ENCODE measurements at regions of chr7 and their contacts with region 1.

Region 1: DNA sequence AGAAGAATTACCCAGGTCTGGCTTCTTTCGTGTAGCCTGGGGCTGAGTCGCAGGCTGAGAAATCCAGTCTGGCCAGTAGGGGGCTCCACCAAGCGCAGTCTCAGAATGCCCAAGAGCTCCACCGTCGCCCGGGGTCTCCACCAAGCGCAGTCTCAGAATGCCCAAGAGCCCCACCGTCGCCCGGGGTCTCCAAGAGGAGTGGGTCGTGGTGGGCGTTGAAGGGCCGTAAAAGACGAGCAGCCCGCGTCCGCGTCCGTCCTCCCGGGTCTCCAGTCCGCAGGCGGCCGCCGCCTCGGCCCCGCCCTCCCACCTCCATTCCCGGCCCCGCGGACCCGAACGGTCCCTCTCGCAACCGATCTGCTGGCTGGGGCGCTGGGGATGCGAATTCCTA is 895 bp upstream of the ZYX start:
- DNase-seq: peak; percentile 92
- ATAC-seq: peak; percentile 55
- H3K4me3 ChIP-seq: peak overlapping the region; percentile 1 to 99 (median 90)
- H3K4me3 Mint-ChIP-seq: peak overlapping the region; percentile 92
- H3K27ac ChIP-seq: peak overlapping the region; percentile 87 to 89
- H3K27ac Mint-ChIP-seq: peak overlapping the region; percentile 93
- H3K4me1 ChIP-seq: peaks cover 43 to 53% of the 10 kb centered on the region in 2 donors
- H3K4me1 Mint-ChIP-seq: peaks cover 28% of the 10 kb centered on the region
- H3K27me3 ChIP-seq: no peaks in the 10 kb centered on the region
- H3K27me3 Mint-ChIP-seq: no peaks in the 10 kb centered on the region
- CTCF ChIP-seq: peak; percentile 85

Region 2: DNA sequence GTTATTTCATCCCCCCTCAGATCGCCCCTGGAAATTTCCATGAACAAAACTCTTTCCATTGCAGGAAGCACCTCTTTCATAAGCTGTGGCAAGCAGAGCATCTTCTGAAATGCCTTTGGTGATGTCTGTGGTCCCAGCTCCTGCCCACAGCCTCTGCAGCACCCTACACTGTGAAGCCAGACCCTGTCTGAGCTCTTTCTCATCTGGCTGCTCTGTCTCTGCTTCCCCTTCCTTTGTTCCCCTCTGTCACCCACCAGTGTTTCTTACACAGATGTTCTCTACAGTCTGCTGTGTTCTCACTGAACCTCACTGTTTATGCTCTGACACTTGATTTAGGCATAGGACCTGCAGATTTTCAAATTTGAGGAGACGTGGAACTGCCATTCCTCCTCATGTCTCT is 198.9 kb before region 1 on chr7:
- CTCF ChIA-PET with region 1: no interaction called
- POLR2A ChIA-PET with region 1: interaction called, 10 read pairs
- intact Hi-C with region 1: no loop called
- DNase-seq: peak; percentile 67
- ATAC-seq: peak; percentile 69
- H3K4me3 ChIP-seq: no peak overlapping the region
- H3K4me3 Mint-ChIP-seq: peak overlapping the region; percentile 5
- H3K27ac ChIP-seq: peak overlapping the region; percentile 51 to 79
- H3K27ac Mint-ChIP-seq: peak overlapping the region; percentile 71
- H3K4me1 ChIP-seq: peaks cover 26 to 29% of the 10 kb centered on the region in 2 donors
- H3K4me1 Mint-ChIP-seq: peaks cover 34% of the 10 kb centered on the region
- H3K27me3 ChIP-seq: no peaks in the 10 kb centered on the region
- H3K27me3 Mint-ChIP-seq: no peaks in the 10 kb centered on the region
- CTCF ChIP-seq: no peak

Region 3: DNA sequence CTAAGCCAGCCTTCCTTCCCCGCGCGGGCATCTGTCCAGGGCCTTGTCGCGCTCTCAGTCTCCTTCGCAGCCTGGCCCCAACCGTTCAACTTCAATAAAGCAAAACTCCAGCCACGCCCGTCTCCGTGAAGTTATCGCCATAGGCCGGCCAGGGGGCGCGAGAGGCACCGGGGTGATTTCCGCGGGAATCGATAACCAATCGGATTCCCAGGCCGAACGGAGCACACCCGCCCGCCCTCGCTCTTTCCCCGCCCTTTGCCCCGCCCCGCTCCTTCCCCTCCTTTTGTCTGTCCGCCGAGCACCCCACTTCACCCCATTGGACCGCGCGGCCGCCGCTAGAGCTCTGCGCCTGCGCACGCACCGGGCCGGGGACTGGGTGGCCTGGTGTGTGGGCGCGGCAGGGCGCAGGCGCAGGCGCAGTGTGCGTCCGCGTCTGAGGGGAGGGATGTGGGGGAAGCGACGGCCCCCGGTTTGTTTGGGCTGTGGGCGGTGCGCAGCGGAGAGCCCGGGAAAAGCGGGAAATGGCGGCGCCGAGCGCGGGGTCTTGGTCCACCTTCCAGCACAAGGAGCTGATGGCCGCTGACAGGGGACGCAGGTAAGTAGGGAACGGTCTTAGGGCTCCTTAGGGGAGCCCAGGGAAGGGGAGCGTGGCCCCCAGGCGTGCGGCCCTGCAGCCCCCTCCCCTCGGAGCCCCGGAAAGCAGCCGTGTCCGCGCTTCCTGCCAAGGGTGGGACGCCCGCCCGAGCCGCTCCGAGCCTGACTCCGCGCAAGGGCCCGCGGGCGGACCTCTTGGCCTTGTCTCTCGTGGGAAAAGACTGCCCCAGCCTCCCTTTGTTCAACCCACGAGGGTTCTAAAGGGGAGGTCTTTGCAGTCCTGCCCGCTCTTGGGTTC is 92.1 kb before region 1 on chr7 and contains the start of gene CASP2:
- CTCF ChIA-PET with region 1: interaction called, 7 read pairs
- POLR2A ChIA-PET with region 1: interaction called, 6 read pairs
- intact Hi-C with region 1: loop called (anchors 1 kb)
- DNase-seq: peak; percentile 99
- ATAC-seq: peak; percentile 90
- H3K4me3 ChIP-seq: peak within 1 kb of the TSS; percentile 73 to 95 (median 91)
- H3K4me3 Mint-ChIP-seq: peak within 1 kb of the TSS; percentile 95
- H3K27ac ChIP-seq: peak within 1 kb of the TSS; percentile 82 to 86
- H3K27ac Mint-ChIP-seq: peak within 1 kb of the TSS; percentile 84
- H3K4me1 ChIP-seq: peaks cover 42 to 43% of the 10 kb centered on the region in 2 donors
- H3K4me1 Mint-ChIP-seq: peaks cover 59% of the 10 kb centered on the region
- H3K27me3 ChIP-seq: no peaks in the 10 kb centered on the region
- H3K27me3 Mint-ChIP-seq: no peaks in the 10 kb centered on the region
- CTCF ChIP-seq: peak; percentile 36
- total RNA-seq, gene CASP2: 66.5 and 71.1 TPM in 2 replicates

Region 4: GRCh38 chr7:143345428-143345900 is 34.8 kb before region 1 on chr7:
- CTCF ChIA-PET with region 1: no interaction called
- POLR2A ChIA-PET with region 1: no interaction called
- intact Hi-C with region 1: no loop called
- DNase-seq: peak; percentile 55
- ATAC-seq: peak; percentile 88
- H3K4me3 ChIP-seq: peak overlapping the region in 3 of 5 experiments; percentile 14 to 27 (median 23)
- H3K4me3 Mint-ChIP-seq: peak overlapping the region; percentile 69
- H3K27ac ChIP-seq: no peak overlapping the region
- H3K27ac Mint-ChIP-seq: no peak overlapping the region
- H3K4me1 ChIP-seq: peaks cover 7 to 9% of the 10 kb centered on the region in 2 donors
- H3K4me1 Mint-ChIP-seq: peaks cover 7% of the 10 kb centered on the region
- H3K27me3 ChIP-seq: peaks cover 0 to 10% (median 4%) of the 10 kb centered on the region in 4 experiments
- H3K27me3 Mint-ChIP-seq: peaks cover 40% of the 10 kb centered on the region
- CTCF ChIP-seq: peak; percentile 63

Region 5: GRCh38 chr7:143408686-143409561 is 28.7 kb after region 1 on chr7 and contains the start of gene EPHA1:
- CTCF ChIA-PET with region 1: interaction called, 15 read pairs
- POLR2A ChIA-PET with region 1: interaction called, 4 read pairs
- intact Hi-C with region 1: loop called (anchors 2 kb)
- DNase-seq: peak; percentile 47
- ATAC-seq: peak; percentile 74
- H3K4me3 ChIP-seq: peak within 1 kb of the TSS in 4 of 5 experiments; percentile 18 to 38 (median 36)
- H3K4me3 Mint-ChIP-seq: peak within 1 kb of the TSS; percentile 76
- H3K27ac ChIP-seq: no peak within 1 kb of the TSS
- H3K27ac Mint-ChIP-seq: no peak within 1 kb of the TSS
- H3K4me1 ChIP-seq: peaks cover 27 to 29% of the 10 kb centered on the region in 2 donors
- H3K4me1 Mint-ChIP-seq: peaks cover 29% of the 10 kb centered on the region
- H3K27me3 ChIP-seq: peaks cover 0 to 36% (median 16%) of the 10 kb centered on the region in 4 experiments
- H3K27me3 Mint-ChIP-seq: peaks cover 32% of the 10 kb centered on the region
- CTCF ChIP-seq: no peak
- total RNA-seq, gene EPHA1: 0.12 and 0.49 TPM in 2 replicates

Region 6: DNA sequence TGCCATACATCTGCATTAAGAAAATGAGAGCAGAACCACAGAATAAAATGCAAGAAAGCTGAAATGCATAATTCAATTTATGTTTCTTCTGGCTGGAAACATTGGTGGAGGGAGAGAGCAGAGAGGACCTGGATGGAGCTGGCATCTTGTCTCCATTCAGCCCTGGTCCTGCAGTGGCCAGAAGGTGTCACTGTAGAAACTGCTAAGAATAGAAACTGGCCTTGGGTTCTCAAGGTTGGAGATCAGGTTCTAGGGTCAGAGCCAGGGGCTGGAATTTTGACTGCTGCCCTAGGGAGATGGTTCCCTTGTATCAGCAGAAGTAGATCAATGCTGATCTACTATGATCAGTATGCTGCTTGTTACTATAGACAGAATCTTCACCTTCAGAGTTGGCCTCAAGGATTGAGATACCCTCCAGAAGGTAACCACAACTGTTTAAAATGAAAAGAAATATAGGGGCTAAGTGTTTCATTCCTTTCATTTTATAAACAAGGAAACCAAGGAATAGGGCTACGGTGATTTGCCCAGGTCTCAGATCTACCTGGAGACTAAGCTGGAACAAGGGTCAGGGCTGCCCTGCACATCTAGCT is 110.6 kb after region 1 on chr7:
- CTCF ChIA-PET with region 1: no interaction called
- POLR2A ChIA-PET with region 1: no interaction called
- intact Hi-C with region 1: no loop called
- DNase-seq: no peak
- ATAC-seq: no peak
- H3K4me3 ChIP-seq: no peak overlapping the region
- H3K4me3 Mint-ChIP-seq: no peak overlapping the region
- H3K27ac ChIP-seq: no peak overlapping the region
- H3K27ac Mint-ChIP-seq: no peak overlapping the region
- H3K4me1 ChIP-seq: no peaks in the 10 kb centered on the region
- H3K4me1 Mint-ChIP-seq: no peaks in the 10 kb centered on the region
- H3K27me3 ChIP-seq: no peaks in the 10 kb centered on the region
- H3K27me3 Mint-ChIP-seq: peaks cover 24% of the 10 kb centered on the region
- CTCF ChIP-seq: no peak

Region 7: DNA sequence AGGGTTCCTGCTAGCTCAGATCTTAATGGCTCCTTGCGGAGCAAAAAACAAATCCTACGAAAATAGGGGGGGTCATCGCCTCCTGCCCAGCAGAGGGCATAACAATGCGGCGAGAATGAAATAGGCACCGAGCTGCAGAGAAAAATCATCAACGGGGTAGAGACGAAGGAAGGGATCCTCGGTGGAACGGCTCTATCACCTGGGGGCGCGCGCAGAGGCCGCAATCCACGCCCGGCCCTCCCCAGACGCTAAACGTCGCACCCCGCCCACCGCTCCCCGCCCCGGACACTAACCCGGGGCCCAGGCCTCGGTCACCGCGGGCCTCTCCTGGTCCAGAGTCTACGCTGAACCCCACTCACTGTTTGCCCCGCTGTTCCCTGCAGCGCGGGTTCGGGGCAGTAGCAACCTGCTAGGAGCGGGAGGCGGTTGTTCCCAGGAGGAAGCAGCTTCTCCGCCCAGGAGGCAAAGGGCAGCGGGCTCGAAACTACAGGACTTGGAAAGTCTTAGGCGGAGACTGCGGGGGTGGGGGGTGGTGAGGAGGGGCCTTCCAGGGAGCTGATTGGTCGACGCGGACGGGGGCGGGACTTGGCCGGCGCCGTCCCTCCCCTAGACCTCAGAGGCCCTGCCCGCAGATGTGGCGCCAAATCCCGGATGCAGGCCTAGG is 521.5 kb after region 1 on chr7 and contains the start of gene TCAF1:
- CTCF ChIA-PET with region 1: no interaction called
- POLR2A ChIA-PET with region 1: no interaction called
- intact Hi-C with region 1: loop called (anchors 2 kb)
- DNase-seq: peak; percentile 92
- ATAC-seq: peak; percentile 95
- H3K4me3 ChIP-seq: peak within 1 kb of the TSS; percentile 59 to 96 (median 87)
- H3K4me3 Mint-ChIP-seq: peak within 1 kb of the TSS; percentile 99
- H3K27ac ChIP-seq: peak within 1 kb of the TSS; percentile 34 to 67
- H3K27ac Mint-ChIP-seq: peak within 1 kb of the TSS; percentile 95
- H3K4me1 ChIP-seq: peaks cover 6 to 10% of the 10 kb centered on the region in 2 donors
- H3K4me1 Mint-ChIP-seq: peaks cover 24% of the 10 kb centered on the region
- H3K27me3 ChIP-seq: no peaks in the 10 kb centered on the region
- H3K27me3 Mint-ChIP-seq: no peaks in the 10 kb centered on the region
- CTCF ChIP-seq: peak; percentile 42
- total RNA-seq, gene TCAF1: 17.3 and 19.7 TPM in 2 replicates